Activated CD4-positive, alpha-beta T cell treated with anti-CD3 and anti-CD28 coated beads for 36 hours (primary cell): ENCODE measurements at regions of chr9 and their contacts with region 1.

Region 1: DNA sequence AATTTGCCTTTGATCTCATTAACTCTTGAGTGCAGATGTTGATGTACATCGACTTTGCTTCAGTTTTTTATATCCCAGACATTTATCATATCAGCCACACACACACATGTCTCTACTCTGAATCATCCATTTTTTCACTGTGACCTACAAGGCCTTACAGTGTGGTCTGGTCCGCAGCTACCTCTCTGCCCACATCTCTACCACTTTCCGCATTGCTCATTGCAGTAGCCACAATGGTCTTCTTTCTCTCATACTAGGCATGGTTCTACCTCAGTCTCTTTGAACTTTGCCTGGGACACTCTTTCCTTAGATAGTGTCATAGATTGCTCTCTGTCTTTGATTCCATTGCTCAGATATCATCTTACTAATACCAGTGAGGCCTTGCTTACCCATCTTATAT is 87.9 kb upstream of the FSD1L start:
- DNase-seq: peak; percentile 79
- ATAC-seq: peak; percentile 87
- H3K4me3 Mint-ChIP-seq: no peak overlapping the region
- H3K27ac Mint-ChIP-seq: no peak overlapping the region
- H3K4me1 Mint-ChIP-seq: peaks cover 17% of the 10 kb centered on the region
- H3K27me3 Mint-ChIP-seq: no peaks in the 10 kb centered on the region

Region 2: GRCh38 chr9:105341434-105342144 is 18.3 kb before region 1 on chr9:
- CTCF ChIA-PET with region 1: interaction called, 6 read pairs
- POLR2A ChIA-PET with region 1: no interaction called
- intact Hi-C with region 1: loop called in 1 of 2 experiments (anchors 2 kb)
- DNase-seq: no peak
- ATAC-seq: peak; percentile 42
- H3K4me3 Mint-ChIP-seq: no peak overlapping the region
- H3K27ac Mint-ChIP-seq: no peak overlapping the region
- H3K4me1 Mint-ChIP-seq: peaks cover 25% of the 10 kb centered on the region
- H3K27me3 Mint-ChIP-seq: no peaks in the 10 kb centered on the region

Region 3: GRCh38 chr9:105405514-105406131 is 45.7 kb after region 1 on chr9:
- CTCF ChIA-PET with region 1: interaction called, 3 read pairs
- POLR2A ChIA-PET with region 1: interaction called, 3 read pairs
- intact Hi-C with region 1: loop called (anchors 1 to 5 kb)
- DNase-seq: peak; percentile 69
- ATAC-seq: peak; percentile 92
- H3K4me3 Mint-ChIP-seq: peak overlapping the region; percentile 21
- H3K27ac Mint-ChIP-seq: peak overlapping the region; percentile 3
- H3K4me1 Mint-ChIP-seq: peaks cover 27% of the 10 kb centered on the region
- H3K27me3 Mint-ChIP-seq: peaks cover 66% of the 10 kb centered on the region